Astrocyte of the cerebellum (primary cell): ENCODE measurements at regions of chr1 and their contacts with region 1.

Region 1: GRCh38 chr1:108897865-108898720 is 21.3 kb downstream of the GPSM2 start:
- DNase-seq: peak; percentile 55
- H3K4me3 ChIP-seq: no peak overlapping the region
- CTCF ChIP-seq: peak; percentile 57

Region 2: DNA sequence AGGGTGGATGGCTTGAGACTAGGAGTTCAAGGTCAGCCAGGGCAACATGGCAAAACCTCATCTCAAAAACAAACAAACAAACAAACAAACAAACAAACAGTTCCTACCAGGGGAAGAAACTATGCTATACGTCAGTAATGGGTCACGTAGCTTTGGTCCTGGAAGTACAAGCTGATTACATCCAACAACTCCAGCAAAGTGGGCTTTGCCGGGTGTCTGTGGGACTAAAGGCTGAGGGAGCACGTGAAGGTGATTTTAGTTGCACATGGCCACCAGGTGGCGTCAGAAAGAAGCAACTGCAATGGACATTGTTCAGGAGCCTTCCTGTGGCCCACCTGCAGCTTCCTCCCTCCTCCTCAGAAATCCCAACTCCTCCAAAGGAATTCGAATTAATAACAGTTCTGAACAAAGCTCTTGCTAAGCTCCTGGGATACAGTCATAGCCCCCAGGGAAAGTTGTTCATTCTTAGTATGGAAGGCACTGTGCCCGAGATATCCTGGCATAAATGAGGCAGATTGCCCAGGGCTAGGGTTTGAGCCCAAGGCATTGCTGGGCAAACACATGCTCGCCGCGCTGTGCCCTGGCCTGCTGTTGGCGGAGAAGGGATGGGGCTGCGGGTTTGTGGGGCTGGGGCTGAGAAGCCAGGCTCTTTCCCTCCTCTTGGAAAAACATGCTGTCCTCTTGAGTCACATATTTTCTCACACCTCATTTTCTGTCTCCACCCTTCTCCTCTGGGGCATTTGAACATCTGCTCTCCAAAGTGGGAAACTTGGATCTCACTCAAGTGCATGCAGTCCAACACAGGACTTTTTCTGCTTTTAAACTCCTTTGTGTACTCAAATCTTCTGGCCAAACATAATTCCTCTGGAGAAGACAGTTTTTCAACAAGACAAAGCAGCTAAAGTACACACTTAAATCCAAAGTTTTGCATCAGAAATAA is 69.8 kb before region 1 on chr1:
- in situ Hi-C with region 1: loop called (anchors 10 kb)
- DNase-seq: peak; percentile 67
- H3K4me3 ChIP-seq: no peak overlapping the region
- CTCF ChIP-seq: peak; percentile 73

Region 3: GRCh38 chr1:108843390-108844137 is 54.5 kb before region 1 on chr1:
- in situ Hi-C with region 1: loop called (anchors 5 kb)
- DNase-seq: no peak
- H3K4me3 ChIP-seq: no peak overlapping the region
- CTCF ChIP-seq: no peak